Breast epithelium (tissue), 4 donors: ENCODE measurements at regions of chr6 and their contacts with region 1.

Region 1: DNA sequence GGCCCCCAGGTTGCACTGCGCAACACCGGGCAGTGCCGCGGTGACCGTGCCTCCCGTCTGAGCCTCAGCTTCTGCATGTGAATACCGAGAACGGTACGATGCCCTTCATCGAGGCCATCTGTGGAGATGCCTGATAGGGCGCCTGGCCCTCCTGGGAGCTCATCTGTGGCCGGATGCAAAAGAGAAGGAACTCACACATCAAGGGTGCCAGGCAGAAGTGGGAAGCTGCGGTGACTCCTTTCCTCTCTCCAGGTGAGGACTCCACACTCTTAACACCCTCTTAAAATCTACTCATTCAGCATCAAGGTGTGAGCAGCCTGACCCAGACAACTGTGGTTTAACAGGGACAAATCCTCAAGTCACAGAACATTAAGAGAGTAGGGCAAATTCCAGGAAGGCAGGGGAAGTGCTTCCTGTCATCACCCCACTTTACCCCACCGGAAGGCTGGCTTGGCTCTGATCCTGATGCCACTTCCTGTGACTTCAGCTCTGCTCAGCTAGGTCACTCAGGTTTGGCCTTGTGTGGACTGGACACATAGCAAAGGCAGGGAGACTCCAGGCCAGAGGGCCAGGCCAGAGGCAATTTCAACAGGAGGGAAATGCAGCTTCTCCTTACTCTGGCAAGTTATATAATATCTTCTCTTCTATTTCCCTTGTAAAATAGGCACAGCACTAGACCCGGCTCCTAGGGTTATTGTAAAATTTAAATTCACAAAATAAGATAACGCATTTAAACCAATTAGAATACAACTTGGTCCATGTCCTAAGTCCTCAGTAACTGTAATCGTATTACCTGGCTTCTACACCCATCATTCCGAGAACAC is 69.4 kb downstream of the CPNE5 start:
- DNase-seq: no peak
- H3K4me3 ChIP-seq: no peak overlapping the region
- H3K27ac ChIP-seq: no peak overlapping the region
- H3K4me1 ChIP-seq: no peaks in the 10 kb centered on the region
- H3K27me3 ChIP-seq: no peaks in the 10 kb centered on the region
- CTCF ChIP-seq: no peak
- POLR2A ChIP-seq: no peak

Region 2: GRCh38 chr6:36751091-36751490 is 18.8 kb before region 1 on chr6:
- intact Hi-C with region 1: loop called (anchors 1 kb)
- DNase-seq: no peak
- H3K4me3 ChIP-seq: no peak overlapping the region
- H3K27ac ChIP-seq: no peak overlapping the region
- H3K4me1 ChIP-seq: peaks cover 0 to 7% of the 10 kb centered on the region in 2 donors
- H3K27me3 ChIP-seq: no peaks in the 10 kb centered on the region
- CTCF ChIP-seq: no peak
- POLR2A ChIP-seq: no peak